Left ventricle myocardium superior (tissue), 1 donor: ENCODE measurements at regions of chr3 and their contacts with region 1.

Region 1: DNA sequence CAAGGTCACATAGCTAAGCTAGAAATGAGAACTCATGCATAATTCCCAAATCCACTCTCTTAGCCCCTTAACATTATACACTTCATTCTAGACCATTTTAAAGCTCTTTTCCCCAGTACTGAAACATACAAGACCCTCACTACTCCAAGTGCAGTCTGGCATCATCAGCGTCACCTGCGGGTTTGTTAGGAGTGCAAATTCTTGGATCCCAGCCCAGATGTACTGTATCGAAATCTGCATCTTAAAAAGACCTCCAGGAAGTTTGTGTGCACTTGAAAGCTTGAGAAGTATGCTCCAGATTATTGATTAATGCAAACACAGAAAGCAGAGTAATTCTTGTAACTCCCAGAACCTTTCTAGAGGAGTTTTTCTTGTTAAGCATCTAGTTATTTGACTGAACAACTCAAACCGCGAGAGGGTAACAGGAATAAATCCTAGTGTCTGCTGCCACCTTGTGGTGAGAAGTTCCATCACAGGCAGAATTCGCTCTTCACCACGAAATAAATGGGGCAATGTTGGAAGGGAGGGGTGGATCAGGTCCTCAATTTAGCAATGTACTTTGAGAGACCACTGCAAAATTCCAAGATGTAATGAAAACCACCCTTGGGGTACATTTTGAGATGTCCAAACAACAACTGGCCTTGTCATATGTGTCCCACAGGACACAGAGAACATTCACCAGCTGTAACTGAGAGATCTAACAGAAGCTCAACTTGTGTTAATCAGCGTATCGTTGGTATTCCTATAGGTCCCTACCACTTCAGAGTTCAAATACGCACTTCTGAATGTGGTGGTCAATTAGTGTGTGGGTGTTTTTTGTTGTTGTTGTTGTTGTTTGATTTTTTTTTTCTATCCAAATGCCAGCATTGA is 583 bp upstream of the C3orf49 start:
- DNase-seq: peak; percentile 40
- ATAC-seq: peak; percentile 61

Region 2: GRCh38 chr3:63349583-63350521 is 468.7 kb before region 1 on chr3:
- intact Hi-C with region 1: loop called (anchors 5 kb)
- DNase-seq: no peak
- ATAC-seq: peak; percentile 48

Region 3: GRCh38 chr3:63961891-63962290 is 143.4 kb after region 1 on chr3:
- intact Hi-C with region 1: no loop called
- DNase-seq: no peak
- ATAC-seq: peak; percentile 39